ENCODE measurements at regions of chr9 and their contacts with region 1.

Region 1: GRCh38 chr9:129995409-129996160 is 47.4 kb downstream of the FNBP1 start:
- DNase-seq: no peak
- H3K4me3 Mint-ChIP-seq: peak overlapping the region; percentile 49
- H3K27ac Mint-ChIP-seq: peak overlapping the region; percentile 87
- H3K4me1 Mint-ChIP-seq: peaks cover 82% of the 10 kb centered on the region
- H3K27me3 Mint-ChIP-seq: no peaks in the 10 kb centered on the region

Region 2: GRCh38 chr9:129584136-129584535 is 411.4 kb before region 1 on chr9:
- CTCF ChIA-PET with region 1: no interaction called
- POLR2A ChIA-PET with region 1: no interaction called
- DNase-seq: peak; percentile 79
- H3K4me3 Mint-ChIP-seq: no peak overlapping the region
- H3K27ac Mint-ChIP-seq: peak overlapping the region; percentile 73
- H3K4me1 Mint-ChIP-seq: peaks cover 76% of the 10 kb centered on the region
- H3K27me3 Mint-ChIP-seq: peaks cover 11% of the 10 kb centered on the region

Region 3: GRCh38 chr9:129863059-129863690 is 132.4 kb before region 1 on chr9:
- CTCF ChIA-PET with region 1: no interaction called
- POLR2A ChIA-PET with region 1: no interaction called
- DNase-seq: peak; percentile 92
- H3K4me3 Mint-ChIP-seq: peak overlapping the region; percentile 35
- H3K27ac Mint-ChIP-seq: peak overlapping the region; percentile 90
- H3K4me1 Mint-ChIP-seq: peaks cover 78% of the 10 kb centered on the region
- H3K27me3 Mint-ChIP-seq: no peaks in the 10 kb centered on the region

Region 4: DNA sequence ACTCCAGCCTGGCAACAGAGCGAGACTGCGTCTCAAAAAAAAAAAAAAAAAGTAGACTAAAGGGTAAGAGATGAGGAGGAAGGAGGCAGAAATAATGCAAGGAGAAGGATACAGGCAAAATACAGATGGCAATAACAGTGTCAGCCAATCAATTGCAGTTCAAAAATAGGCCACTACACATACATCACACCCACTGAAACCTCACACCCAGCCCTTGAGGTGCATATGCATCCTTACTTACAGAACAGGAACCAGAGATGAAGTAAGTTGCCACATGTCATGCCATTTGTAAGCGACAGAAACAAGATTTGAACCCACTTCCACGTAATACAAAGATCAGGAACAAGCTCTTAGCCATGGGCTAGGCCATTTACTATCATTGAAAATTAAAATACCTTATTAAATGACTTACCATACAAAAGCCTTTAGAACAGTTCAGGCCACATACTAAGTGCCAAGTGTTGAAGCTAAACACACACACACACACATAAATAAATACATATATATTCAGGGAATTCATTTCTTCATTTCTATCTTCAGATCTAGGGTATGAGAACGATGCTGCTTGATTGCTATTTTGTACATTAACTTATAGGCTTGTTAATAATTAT is 51.0 kb before region 1 on chr9:
- CTCF ChIA-PET with region 1: interaction called, 3 read pairs
- POLR2A ChIA-PET with region 1: interaction called, 11 read pairs
- DNase-seq: peak; percentile 76
- H3K4me3 Mint-ChIP-seq: peak overlapping the region; percentile 1
- H3K27ac Mint-ChIP-seq: peak overlapping the region; percentile 80
- H3K4me1 Mint-ChIP-seq: peaks cover 49% of the 10 kb centered on the region
- H3K27me3 Mint-ChIP-seq: no peaks in the 10 kb centered on the region

Region 5: DNA sequence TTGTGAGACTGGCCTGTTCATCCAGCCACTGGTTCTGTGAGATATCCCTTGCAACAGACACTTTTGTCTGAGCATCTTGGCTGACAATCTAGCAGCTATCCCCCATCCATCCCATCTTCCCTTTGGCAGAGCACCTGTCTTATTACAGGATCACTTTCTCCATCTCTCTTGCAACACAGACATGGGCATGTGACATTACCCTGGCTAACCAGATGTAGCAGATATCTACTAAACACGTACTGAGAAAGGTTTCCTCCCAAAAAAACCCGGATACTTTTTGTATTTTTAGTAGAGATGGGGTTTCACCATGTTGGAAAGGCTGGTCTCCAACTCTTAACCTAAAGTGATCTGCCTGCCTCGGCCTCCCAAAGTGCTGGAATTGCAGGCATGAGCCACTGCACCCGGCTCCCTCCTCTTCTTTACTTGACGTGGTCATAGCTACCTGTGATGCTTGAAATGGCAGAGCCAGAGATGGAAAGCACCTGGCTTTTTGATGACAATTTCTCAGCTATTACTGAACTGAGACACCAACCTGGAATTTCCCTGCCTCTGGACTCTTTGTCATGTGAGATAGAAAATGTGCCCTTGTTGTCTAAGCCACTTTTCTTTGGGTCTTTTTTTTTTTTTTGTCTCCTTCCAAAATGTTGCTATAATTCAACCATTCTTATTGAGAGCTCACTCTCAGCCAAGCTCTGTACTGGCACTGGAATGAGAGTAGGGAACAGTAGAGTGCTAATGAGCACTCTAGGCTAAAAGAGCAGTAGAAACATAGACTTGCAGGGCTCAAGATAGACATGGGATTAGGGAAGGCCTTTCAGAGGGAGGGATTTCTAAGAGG is 14.8 kb after region 1 on chr9:
- CTCF ChIA-PET with region 1: interaction called, 4 read pairs
- POLR2A ChIA-PET with region 1: interaction called, 14 read pairs
- DNase-seq: no peak
- H3K4me3 Mint-ChIP-seq: no peak overlapping the region
- H3K27ac Mint-ChIP-seq: peak overlapping the region; percentile 66
- H3K4me1 Mint-ChIP-seq: peaks cover 78% of the 10 kb centered on the region
- H3K27me3 Mint-ChIP-seq: no peaks in the 10 kb centered on the region

Region 6: GRCh38 chr9:130029223-130029973 is 33.8 kb after region 1 on chr9:
- CTCF ChIA-PET with region 1: interaction called, 4 read pairs
- POLR2A ChIA-PET with region 1: interaction called, 25 read pairs
- DNase-seq: peak; percentile 53
- H3K4me3 Mint-ChIP-seq: peak overlapping the region; percentile 39
- H3K27ac Mint-ChIP-seq: peak overlapping the region; percentile 88
- H3K4me1 Mint-ChIP-seq: peaks cover 90% of the 10 kb centered on the region
- H3K27me3 Mint-ChIP-seq: no peaks in the 10 kb centered on the region

Region 7: GRCh38 chr9:130034570-130034969 is 39.0 kb after region 1 on chr9:
- CTCF ChIA-PET with region 1: interaction called, 11 read pairs
- POLR2A ChIA-PET with region 1: interaction called, 97 read pairs
- DNase-seq: no peak
- H3K4me3 Mint-ChIP-seq: peak overlapping the region; percentile 34
- H3K27ac Mint-ChIP-seq: peak overlapping the region; percentile 91
- H3K4me1 Mint-ChIP-seq: peaks cover 82% of the 10 kb centered on the region
- H3K27me3 Mint-ChIP-seq: no peaks in the 10 kb centered on the region

Region 8: DNA sequence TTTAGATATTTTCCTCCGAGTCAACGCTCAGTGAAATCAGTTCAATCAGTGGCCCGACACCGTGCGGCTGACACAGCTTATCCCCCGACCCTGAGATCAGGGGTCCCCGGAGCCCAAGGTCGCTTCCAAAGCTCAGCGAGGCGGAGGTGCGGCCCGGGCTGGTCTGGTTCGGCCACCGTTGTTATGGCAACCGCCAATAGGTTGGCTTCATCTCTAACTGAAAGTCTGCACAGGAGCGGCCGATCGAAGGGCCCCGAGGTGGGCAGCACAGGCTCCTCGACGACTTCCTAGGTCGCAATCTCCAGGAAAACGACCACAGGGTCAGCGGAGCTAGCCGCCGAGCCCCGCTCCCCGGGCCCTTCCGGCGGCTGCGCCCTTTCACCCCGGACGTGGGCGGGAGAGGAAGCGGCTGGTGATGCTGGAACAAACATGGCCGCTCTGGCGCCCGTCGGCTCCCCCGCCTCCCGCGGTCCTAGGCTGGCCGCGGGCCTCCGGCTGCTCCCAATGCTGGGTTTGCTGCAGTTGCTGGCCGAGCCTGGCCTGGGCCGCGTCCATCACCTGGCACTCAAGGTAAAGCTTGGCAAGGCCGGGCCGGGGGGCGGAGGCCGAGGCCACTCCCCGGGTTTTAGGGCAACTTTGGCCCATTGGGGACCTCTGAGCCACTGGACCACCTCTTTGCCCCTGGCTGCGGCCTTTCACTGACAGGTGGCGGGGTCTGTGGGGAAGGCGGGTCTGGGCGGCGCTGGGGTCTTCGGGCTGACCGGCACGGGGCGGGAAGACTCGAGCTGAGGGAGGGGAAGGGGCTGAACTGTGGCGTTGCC is 58.1 kb after region 1 on chr9 and contains the start of gene GPR107:
- CTCF ChIA-PET with region 1: no interaction called
- POLR2A ChIA-PET with region 1: interaction called, 13 read pairs
- DNase-seq: peak; percentile 82
- H3K4me3 Mint-ChIP-seq: peak within 1 kb of the TSS; percentile 92
- H3K27ac Mint-ChIP-seq: peak within 1 kb of the TSS; percentile 91
- H3K4me1 Mint-ChIP-seq: peaks cover 42% of the 10 kb centered on the region
- H3K27me3 Mint-ChIP-seq: no peaks in the 10 kb centered on the region
- total RNA-seq, gene GPR107: 25.1 to 26.3 TPM